ENCODE measurements at regions of chr4 and their contacts with region 1.

Region 1: DNA sequence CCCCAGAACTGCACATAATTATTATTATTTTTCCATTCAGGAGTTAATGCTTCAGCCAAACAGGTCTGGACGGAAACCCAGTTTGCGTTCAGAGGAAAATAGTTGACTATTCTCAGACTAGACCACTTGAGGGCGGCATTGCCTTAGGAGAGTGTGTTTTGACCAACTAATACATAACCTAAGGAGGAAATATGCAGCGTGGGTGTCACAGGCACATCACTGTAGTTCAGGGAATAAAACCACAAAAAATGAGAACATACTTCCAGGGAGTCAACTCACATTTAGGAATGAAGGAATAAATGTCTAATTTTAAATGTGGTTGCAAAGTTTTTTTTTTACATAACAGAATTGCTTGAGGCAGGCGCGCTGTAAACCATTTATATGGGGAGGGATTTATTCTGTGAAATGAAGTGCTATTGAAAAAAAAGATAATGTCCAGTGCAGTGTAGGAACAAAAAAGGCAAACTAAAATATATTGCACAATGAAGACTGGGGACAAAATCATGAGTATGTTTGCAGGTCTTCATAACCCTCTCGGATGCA is 93.3 kb downstream of the SYNPO2 start:
- DNase-seq: peak; percentile 42 to 53 (median 52)
- H3K4me3 ChIP-seq: no peak overlapping the region
- H3K4me3 Mint-ChIP-seq: no peak overlapping the region
- H3K27ac ChIP-seq: no peak overlapping the region
- H3K27ac Mint-ChIP-seq: no peak overlapping the region
- H3K4me1 ChIP-seq: no peaks in the 10 kb centered on the region
- H3K4me1 Mint-ChIP-seq: no peaks in the 10 kb centered on the region
- H3K27me3 ChIP-seq: no peaks in the 10 kb centered on the region
- H3K27me3 Mint-ChIP-seq: peaks cover 3 to 5% of the 10 kb centered on the region in 2 donors

Region 2: DNA sequence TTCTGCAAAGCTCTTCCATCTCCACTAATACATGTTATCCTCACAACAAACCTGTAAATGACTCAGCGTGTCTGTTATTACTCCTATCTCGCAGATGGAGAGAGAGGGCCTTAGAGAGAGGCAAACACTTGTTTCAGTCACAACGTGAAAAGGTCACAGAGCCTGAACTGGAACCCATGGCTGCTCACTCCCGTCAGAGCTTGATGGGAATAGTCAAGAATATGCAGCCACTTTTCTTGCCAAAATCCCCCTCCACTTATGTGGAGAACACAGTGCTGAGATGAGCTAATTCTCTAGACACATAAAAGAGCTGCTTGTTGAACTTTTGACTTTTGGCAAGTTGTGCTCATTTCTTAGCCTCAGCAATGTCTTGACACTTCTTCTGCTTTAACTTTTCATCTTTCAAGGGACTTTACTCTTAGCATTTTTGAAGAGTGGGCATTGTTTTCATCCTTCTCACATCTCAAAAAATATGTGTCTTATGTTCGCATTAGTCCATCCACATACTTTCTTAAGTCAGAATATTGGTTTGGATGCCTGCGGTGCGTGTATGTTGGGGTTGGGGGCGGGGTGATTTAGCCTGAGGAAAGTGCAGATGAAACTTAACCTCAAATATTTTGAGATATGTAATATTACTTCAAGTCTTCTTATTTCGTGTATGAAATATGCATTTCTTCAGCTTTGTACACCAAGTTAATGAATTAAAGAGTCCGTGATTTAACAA is 24.0 kb before region 1 on chr4:
- CTCF ChIA-PET with region 1: no interaction called
- POLR2A ChIA-PET with region 1: no interaction called
- intact Hi-C with region 1: no loop called
- DNase-seq: no peak
- H3K4me3 ChIP-seq: no peak overlapping the region
- H3K4me3 Mint-ChIP-seq: no peak overlapping the region
- H3K27ac ChIP-seq: no peak overlapping the region
- H3K27ac Mint-ChIP-seq: no peak overlapping the region
- H3K4me1 ChIP-seq: no peaks in the 10 kb centered on the region
- H3K4me1 Mint-ChIP-seq: no peaks in the 10 kb centered on the region
- H3K27me3 ChIP-seq: no peaks in the 10 kb centered on the region
- H3K27me3 Mint-ChIP-seq: peaks cover 0 to 14% of the 10 kb centered on the region in 2 donors

Region 3: GRCh38 chr4:119286377-119287002 is 304.6 kb after region 1 on chr4:
- CTCF ChIA-PET with region 1: no interaction called
- POLR2A ChIA-PET with region 1: no interaction called
- intact Hi-C with region 1: loop called (anchors 5 kb)
- DNase-seq: peak in 4 of 5 donors; percentile 35 to 50 (median 48)
- H3K4me3 ChIP-seq: no peak overlapping the region
- H3K4me3 Mint-ChIP-seq: no peak overlapping the region
- H3K27ac ChIP-seq: no peak overlapping the region
- H3K27ac Mint-ChIP-seq: peak overlapping the region in 1 of 7 donors; percentile 22
- H3K4me1 ChIP-seq: peaks cover 19% of the 10 kb centered on the region
- H3K4me1 Mint-ChIP-seq: peaks cover 18 to 24% (median 22%) of the 10 kb centered on the region in 4 donors
- H3K27me3 ChIP-seq: no peaks in the 10 kb centered on the region
- H3K27me3 Mint-ChIP-seq: no peaks in the 10 kb centered on the region

Region 4: DNA sequence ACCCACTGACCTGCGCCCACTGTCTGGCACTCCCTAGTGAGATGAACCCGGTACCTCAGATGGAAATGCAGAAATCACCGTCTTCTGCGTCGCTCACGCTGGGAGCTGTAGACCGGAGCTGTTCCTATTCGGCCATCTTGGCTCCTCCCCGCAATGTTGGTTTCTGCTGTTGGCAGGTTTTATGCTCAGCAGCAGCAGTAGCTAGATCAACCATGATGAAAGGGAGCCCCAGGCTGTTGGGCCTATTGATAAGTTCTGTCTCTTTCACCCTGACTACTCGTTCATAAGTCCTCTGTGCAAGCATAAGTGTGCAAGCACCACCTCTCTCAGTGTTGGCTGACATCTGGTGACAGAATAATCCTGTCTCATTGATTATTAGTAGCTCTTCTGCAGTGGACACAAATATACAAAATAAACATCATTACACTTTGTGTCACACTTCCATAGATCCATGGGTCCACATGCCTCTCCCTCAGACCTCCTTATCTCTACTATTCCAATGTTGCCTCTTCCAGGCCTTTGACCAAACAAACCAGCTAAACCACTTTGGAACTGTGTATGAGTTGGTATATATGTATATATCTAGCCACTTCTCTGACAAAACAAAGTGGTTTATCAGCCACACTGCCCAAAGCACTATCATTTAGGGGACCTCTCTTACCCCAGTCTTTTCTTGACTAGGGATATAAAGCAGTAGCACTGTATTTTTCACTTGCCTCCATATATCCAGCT is 1666.6 kb after region 1 on chr4:
- CTCF ChIA-PET with region 1: no interaction called
- POLR2A ChIA-PET with region 1: no interaction called
- intact Hi-C with region 1: no loop called
- DNase-seq: no peak
- H3K4me3 ChIP-seq: no peak overlapping the region
- H3K4me3 Mint-ChIP-seq: no peak overlapping the region
- H3K27ac ChIP-seq: no peak overlapping the region
- H3K27ac Mint-ChIP-seq: no peak overlapping the region
- H3K4me1 ChIP-seq: no peaks in the 10 kb centered on the region
- H3K4me1 Mint-ChIP-seq: no peaks in the 10 kb centered on the region
- H3K27me3 ChIP-seq: no peaks in the 10 kb centered on the region
- H3K27me3 Mint-ChIP-seq: peaks cover 5 to 7% of the 10 kb centered on the region in 2 donors

Measured in CD4-positive, alpha-beta memory T cell (primary cell).